Activated T-helper 1 cell treated with anti-CD3 and anti-CD28 coated beads, Interleukin-12 subunit alpha, Interleukin-12 subunit beta, Interleukin-2, Interleukin-4 antibody, amounts not matched to agents 30 ng/mL and 10 ng/mL and 1 ng/mL, durations not matched to agents 14 hours and 24 hours and 36 hours (primary cell): ENCODE measurements at regions of chr1 and their contacts with region 1.

Region 1: DNA sequence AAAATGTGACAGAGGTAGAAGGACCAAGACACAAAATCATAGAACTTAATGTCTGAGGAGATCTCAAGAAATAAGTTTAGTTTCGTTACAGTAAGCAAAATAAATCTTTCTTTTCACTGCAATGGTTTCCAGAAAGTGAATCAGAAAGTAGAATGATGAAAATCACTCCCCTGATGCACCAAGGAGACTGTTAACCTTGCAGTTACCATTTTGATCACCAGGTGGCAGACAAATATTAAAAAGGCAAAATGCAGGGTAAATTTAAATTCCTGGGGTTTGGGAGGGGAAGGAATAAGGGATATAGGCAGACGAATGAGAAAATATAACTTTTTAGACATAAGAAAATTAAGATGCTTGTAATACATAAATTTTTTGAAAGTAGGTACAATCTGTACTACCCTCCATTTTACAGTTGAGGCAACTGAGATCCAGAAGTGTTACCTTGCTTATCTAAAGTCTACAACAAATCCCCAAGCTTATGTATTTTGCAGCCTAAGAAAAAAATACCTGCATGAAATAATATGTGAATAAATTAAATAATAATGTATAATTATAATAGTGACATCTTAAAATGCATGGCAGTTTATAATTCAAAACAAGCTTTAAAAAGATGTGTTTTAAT is 253.2 kb downstream of the CRB1 start:
- DNase-seq: no peak
- H3K4me3 Mint-ChIP-seq: no peak overlapping the region
- H3K27ac Mint-ChIP-seq: no peak overlapping the region
- H3K4me1 Mint-ChIP-seq: peaks cover 7% of the 10 kb centered on the region
- H3K27me3 Mint-ChIP-seq: no peaks in the 10 kb centered on the region

Region 2: DNA sequence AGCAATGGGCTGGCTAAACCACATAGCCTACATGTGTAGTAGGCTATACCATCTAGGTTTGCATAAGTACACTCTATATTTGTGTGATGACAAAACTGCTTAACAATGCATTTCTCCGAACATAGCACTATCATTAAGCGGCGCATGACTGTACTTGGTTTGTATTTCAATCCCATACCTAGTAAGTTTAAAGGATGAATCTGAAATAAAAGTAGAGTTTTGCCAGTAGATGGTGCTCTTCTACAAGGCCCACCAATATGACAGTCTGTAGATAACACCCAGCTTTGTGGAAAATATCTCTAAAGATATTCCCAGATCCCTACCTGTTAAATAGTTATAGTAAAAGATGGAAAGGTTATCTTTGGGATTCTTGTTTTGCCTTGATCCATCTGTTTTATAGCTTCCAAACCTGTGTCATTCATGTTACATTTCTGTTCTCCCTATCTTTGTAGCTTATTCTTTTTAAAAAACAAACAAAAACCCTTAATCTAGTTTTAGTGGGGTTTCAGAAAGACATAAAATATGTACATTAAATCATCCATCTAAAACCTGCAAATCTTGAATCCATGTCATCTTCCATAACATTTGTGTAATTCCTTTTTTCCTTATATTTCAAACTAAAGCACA is 340.9 kb before region 1 on chr1:
- intact Hi-C with region 1: loop called (anchors 10 kb)
- DNase-seq: no peak
- H3K4me3 Mint-ChIP-seq: no peak overlapping the region
- H3K27ac Mint-ChIP-seq: no peak overlapping the region
- H3K4me1 Mint-ChIP-seq: peaks cover 5% of the 10 kb centered on the region
- H3K27me3 Mint-ChIP-seq: no peaks in the 10 kb centered on the region

Region 3: GRCh38 chr1:197399755-197400527 is 121.3 kb before region 1 on chr1:
- intact Hi-C with region 1: loop called (anchors 5 kb)
- DNase-seq: no peak
- H3K4me3 Mint-ChIP-seq: no peak overlapping the region
- H3K27ac Mint-ChIP-seq: no peak overlapping the region
- H3K4me1 Mint-ChIP-seq: no peaks in the 10 kb centered on the region
- H3K27me3 Mint-ChIP-seq: peaks cover 5% of the 10 kb centered on the region

Region 4: GRCh38 chr1:197481101-197481500 is 40.1 kb before region 1 on chr1:
- intact Hi-C with region 1: no loop called
- DNase-seq: peak; percentile 14
- H3K4me3 Mint-ChIP-seq: no peak overlapping the region
- H3K27ac Mint-ChIP-seq: no peak overlapping the region
- H3K4me1 Mint-ChIP-seq: peaks cover 14% of the 10 kb centered on the region
- H3K27me3 Mint-ChIP-seq: peaks cover 3% of the 10 kb centered on the region

Region 5: GRCh38 chr1:197868751-197869489 is 347.7 kb after region 1 on chr1:
- intact Hi-C with region 1: loop called (anchors 1 kb)
- DNase-seq: peak; percentile 25
- H3K4me3 Mint-ChIP-seq: no peak overlapping the region
- H3K27ac Mint-ChIP-seq: no peak overlapping the region
- H3K4me1 Mint-ChIP-seq: no peaks in the 10 kb centered on the region
- H3K27me3 Mint-ChIP-seq: peaks cover 29% of the 10 kb centered on the region

Region 6: GRCh38 chr1:198088360-198089071 is 567.3 kb after region 1 on chr1:
- intact Hi-C with region 1: loop called (anchors 10 kb)
- DNase-seq: no peak
- H3K4me3 Mint-ChIP-seq: no peak overlapping the region
- H3K27ac Mint-ChIP-seq: no peak overlapping the region
- H3K4me1 Mint-ChIP-seq: peaks cover 8% of the 10 kb centered on the region
- H3K27me3 Mint-ChIP-seq: peaks cover 5% of the 10 kb centered on the region

Region 7: DNA sequence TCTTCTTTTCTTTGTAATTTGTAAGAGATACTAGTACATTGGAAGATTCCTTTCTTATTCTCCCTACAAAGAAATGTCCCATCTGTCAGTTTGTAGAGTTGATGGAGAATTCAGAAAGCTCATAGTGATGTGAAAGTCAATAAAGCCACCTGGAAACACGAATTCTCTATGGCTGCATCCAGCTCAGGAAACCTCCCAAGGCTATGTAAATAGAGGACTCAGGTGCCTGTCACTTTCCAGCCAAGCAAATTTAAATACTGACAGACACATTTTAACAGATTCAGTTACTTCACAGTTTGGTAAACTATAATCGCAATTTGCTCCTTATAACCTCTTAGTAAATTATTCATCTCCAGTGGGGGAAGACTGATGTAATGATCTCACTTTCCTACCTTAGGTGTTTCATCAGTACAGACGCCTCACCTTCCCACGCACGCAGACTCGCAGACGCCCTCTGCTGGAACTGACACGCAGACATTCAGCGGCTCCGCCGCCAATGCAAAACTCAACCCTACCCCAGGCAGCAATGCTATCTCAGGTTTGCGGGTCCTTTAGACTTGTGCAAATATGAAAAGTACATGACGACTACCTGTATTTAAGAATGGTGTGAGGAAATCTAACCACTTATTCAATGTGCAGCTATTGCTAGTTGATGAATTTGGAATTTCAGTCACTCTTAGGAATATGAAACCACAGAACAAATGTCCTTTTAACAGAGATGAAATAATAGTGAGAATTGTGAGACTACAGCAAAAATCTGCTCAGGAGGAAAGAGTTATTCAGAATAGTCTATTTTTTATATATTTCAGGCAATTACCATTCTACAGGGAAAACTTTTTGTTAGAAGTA is 1178.2 kb after region 1 on chr1:
- intact Hi-C with region 1: loop called (anchors 10 kb)
- DNase-seq: peak; percentile 53
- H3K4me3 Mint-ChIP-seq: no peak overlapping the region
- H3K27ac Mint-ChIP-seq: peak overlapping the region; percentile 74
- H3K4me1 Mint-ChIP-seq: peaks cover 81% of the 10 kb centered on the region
- H3K27me3 Mint-ChIP-seq: no peaks in the 10 kb centered on the region